Panc1 (cell line): ENCODE measurements at regions of chr7 and their contacts with region 1.

Region 1: DNA sequence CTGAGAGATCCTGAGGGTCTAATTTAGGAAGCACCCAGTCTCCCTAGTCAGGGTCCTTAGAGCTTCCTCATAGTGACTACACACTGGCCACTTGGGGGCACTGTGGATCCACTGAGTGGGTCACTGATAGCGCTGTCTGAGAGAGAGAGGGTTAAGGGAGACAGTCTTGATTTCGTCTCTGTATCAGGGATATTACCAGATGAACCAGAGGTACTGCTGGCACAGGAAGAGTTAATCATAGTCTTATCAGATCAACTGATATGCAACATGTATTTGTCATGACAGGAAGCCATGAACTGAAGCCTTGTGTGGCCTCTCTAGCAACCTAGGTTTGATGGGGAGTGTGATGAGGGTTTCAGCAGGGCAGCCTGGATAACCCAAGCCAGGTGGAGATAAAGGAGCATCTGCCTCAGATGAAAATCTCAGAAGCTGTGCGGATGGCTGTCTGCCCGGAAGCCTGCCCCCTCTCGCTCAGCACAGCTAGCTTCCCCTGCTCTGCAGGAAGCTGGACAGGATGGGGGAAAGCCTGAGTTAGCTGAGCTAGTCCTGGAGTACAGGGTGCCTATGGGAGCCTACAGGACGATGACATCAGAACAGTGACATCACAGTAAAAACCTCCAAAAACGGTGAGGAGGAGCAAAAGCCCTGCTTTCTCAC is 214.0 kb upstream of the PRSS1 start:
- DNase-seq: peak; percentile 81
- ATAC-seq: peak; percentile 97
- H3K4me3 ChIP-seq: no peak overlapping the region
- H3K27ac ChIP-seq: no peak overlapping the region
- H3K4me1 ChIP-seq: no peaks in the 10 kb centered on the region
- H3K27me3 ChIP-seq: peaks cover 10% of the 10 kb centered on the region
- CTCF ChIP-seq: peak; percentile 89

Region 2: GRCh38 chr7:142587578-142588191 is 52.4 kb after region 1 on chr7:
- CTCF ChIA-PET with region 1: interaction called, 4 read pairs
- POLR2A ChIA-PET with region 1: no interaction called
- in situ Hi-C with region 1: no loop called
- intact Hi-C with region 1: loop called (anchors 5 kb)
- DNase-seq: no peak
- ATAC-seq: peak; percentile 81
- H3K4me3 ChIP-seq: no peak overlapping the region
- H3K27ac ChIP-seq: no peak overlapping the region
- H3K4me1 ChIP-seq: peaks cover 5% of the 10 kb centered on the region
- H3K27me3 ChIP-seq: no peaks in the 10 kb centered on the region
- CTCF ChIP-seq: peak; percentile 69

Region 3: DNA sequence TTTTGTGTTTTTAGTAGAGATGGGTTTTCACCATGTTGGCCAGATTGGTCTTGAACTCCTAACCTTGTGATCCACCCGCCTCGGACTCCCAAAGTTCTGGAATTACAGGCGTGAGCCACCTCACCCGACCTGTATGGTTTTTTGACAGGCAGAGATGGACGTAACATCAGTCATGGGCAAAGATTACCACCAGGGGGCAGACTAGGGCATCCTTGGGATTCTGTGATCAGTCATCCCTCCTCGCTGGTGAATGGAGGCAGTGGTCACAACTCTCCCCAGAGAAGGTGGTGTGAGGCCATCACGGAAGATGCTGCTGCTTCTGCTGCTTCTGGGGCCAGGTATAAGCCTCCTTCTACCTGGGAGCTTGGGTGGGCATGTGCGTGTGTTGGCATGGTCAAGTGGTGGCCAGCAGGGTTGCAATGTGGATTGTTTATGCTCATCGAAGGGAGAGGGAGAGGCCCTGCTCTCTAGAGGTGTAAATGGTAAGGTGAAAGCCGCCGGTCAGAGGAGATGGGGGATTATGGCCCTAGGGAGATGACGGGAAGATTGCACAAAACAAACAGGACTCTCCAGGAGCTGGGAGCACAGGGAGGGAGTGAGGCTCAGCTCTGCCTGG is 91.3 kb after region 1 on chr7:
- CTCF ChIA-PET with region 1: interaction called, 7 read pairs
- POLR2A ChIA-PET with region 1: no interaction called
- in situ Hi-C with region 1: no loop called
- intact Hi-C with region 1: loop called (anchors 5 kb)
- DNase-seq: peak; percentile 22
- ATAC-seq: no peak
- H3K4me3 ChIP-seq: no peak overlapping the region
- H3K27ac ChIP-seq: no peak overlapping the region
- H3K4me1 ChIP-seq: no peaks in the 10 kb centered on the region
- H3K27me3 ChIP-seq: peaks cover 11% of the 10 kb centered on the region
- CTCF ChIP-seq: peak; percentile 67

Region 4: GRCh38 chr7:142811154-142811737 is 276.0 kb after region 1 on chr7:
- CTCF ChIA-PET with region 1: interaction called, 3 read pairs
- POLR2A ChIA-PET with region 1: no interaction called
- in situ Hi-C with region 1: no loop called
- intact Hi-C with region 1: loop called (anchors 10 kb)
- DNase-seq: no peak
- ATAC-seq: no peak
- H3K4me3 ChIP-seq: no peak overlapping the region
- H3K27ac ChIP-seq: no peak overlapping the region
- H3K4me1 ChIP-seq: no peaks in the 10 kb centered on the region
- H3K27me3 ChIP-seq: peaks cover 9% of the 10 kb centered on the region
- CTCF ChIP-seq: peak; percentile 72